Ascending aorta (tissue), 2 donors: ENCODE measurements at regions of chr19 and their contacts with region 1.

Region 1: DNA sequence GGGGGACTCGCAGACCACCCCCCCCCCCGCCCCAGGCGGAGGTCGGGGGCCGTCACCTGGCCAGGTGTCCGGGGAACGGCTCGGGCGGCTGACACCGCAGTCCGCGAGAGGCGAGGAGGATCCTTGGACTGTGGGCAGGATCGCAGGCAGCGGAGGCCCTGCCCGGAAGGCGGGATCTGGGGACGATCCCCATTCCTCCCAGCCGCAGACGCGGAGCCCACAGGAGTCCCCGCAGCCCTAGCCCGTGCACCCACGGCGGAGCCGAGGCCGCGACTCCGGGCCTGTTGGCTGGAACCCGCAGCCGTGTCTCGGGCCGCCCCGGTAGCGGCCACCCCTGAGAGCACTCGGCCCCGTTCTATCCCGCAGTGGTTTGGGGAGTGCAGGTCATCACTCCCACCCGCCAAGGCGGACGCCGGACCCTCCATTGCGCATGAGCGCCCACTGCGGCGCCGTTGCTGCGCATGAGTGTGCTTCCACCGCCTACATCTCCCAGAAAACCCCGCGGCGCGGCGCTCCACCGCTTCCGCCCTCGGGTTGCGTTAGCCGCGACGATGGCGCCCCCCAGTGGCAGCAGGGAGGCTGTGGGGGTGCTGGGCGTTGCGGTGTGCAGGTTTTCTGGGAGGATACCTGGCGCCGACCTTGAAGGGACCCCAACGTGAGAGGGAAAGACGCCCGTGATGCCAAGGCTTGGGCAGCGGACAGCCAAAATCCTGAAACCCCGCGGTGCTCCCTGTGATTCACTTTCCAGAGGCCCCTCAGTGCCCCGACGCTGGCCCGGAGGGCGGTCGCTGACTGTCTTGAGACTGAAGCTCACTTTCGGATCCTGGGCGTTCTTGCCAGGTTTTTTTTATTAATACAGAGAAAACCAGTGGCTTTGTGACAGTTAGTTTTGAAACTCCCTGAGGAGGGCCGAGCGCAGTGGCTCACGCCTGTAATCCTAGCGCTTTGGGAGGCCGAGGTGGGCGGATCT is 4.4 kb upstream of the ZNF329 start:
- DNase-seq: peak; percentile 77 to 98
- H3K4me3 ChIP-seq: peak overlapping the region; percentile 84 to 86
- H3K27ac ChIP-seq: peak overlapping the region; percentile 93 to 95
- H3K4me1 ChIP-seq: peaks cover 5 to 20% of the 10 kb centered on the region in 2 donors
- H3K27me3 ChIP-seq: no peaks in the 10 kb centered on the region
- CTCF ChIP-seq: peak; percentile 97 to 98 (median 98)

Region 2: GRCh38 chr19:56403764-56404704 is 1750.9 kb before region 1 on chr19 and contains the start of gene ZNF583:
- intact Hi-C with region 1: loop called (anchors 10 kb)
- DNase-seq: peak; percentile 92 to 98
- H3K4me3 ChIP-seq: peak within 1 kb of the TSS; percentile 88 to 91
- H3K27ac ChIP-seq: peak within 1 kb of the TSS; percentile 93 to 97
- H3K4me1 ChIP-seq: peaks cover 0 to 10% of the 10 kb centered on the region in 2 donors
- H3K27me3 ChIP-seq: no peaks in the 10 kb centered on the region
- CTCF ChIP-seq: no peak
- total RNA-seq, gene ZNF583: 0.21 TPM

Region 3: DNA sequence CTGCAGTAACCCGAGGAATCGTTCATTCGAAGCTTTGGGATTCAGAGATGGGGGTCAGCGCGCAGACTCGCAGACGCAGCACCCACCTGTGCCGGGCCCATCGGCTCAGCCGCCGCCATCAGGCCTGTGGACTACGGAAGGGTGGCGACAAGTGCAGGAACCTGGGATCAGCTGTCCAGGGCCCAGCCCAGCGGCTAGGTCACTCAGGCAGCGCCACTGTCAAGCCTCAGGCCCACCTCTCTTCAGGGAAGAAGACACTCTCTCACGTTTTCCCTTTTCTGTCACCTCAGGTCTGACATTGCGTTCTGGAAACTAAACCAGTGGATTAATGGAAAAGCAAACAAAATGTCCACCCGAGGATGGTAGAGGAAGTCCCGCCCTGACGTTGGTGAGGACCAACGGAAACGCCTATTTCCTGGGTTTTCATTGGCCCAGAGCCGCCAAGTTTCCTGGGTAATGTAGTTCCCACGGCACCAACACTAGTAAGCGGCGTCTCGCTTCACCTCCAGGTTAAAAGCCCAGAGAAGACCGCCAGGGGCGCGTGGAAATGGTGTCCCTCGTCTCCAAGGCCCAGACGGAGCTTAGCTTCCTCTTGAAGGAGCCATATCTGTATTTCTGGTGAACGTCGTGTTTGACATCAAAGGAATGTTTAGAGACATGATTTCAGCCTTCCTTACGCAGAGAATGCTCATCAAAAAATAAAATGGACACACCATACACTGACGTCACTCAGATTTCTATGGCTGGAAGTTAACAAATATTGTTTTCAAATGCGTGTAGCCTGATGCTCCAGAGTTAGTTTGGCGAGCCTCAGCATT is 677.6 kb before region 1 on chr19 and contains the start of gene ZNF772:
- intact Hi-C with region 1: loop called (anchors 10 kb)
- DNase-seq: peak; percentile 65 to 92
- H3K4me3 ChIP-seq: peak within 1 kb of the TSS; percentile 57 to 77
- H3K27ac ChIP-seq: peak within 1 kb of the TSS; percentile 63 to 76
- H3K4me1 ChIP-seq: no peaks in the 10 kb centered on the region
- H3K27me3 ChIP-seq: no peaks in the 10 kb centered on the region
- CTCF ChIP-seq: peak in 2 of 3 experiments; percentile 25 to 28
- total RNA-seq, gene ZNF772: 3.7 TPM

Region 4: GRCh38 chr19:57746580-57747471 is 408.1 kb before region 1 on chr19 and contains the start of gene ZNF776:
- intact Hi-C with region 1: loop called (anchors 10 kb)
- DNase-seq: peak; percentile 43 to 89
- H3K4me3 ChIP-seq: peak within 1 kb of the TSS; percentile 81 to 85
- H3K27ac ChIP-seq: peak within 1 kb of the TSS; percentile 55 to 63
- H3K4me1 ChIP-seq: no peaks in the 10 kb centered on the region
- H3K27me3 ChIP-seq: no peaks in the 10 kb centered on the region
- CTCF ChIP-seq: no peak
- total RNA-seq, gene ZNF776: 1.9 TPM

Region 5: DNA sequence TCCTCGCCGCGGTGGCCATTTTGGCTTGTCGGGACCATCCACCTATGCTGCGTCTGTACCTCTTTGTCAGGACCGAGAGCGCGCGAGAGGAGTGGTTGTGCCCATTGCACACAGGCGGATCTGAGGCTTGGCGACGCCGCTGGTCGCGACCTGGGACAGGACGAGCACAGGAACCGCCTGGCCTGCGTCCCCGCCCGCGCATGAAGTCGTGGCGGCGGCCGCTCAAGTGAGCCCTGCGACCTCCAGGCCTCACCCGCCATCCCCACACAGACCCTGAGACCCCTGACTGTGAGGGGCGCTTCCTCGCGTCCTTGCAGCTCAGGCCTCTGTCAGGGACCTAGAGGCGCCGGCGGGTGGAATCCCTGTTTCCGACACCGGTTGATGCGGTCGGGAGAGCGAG is 368.7 kb before region 1 on chr19:
- intact Hi-C with region 1: no loop called
- DNase-seq: no peak
- H3K4me3 ChIP-seq: no peak overlapping the region
- H3K27ac ChIP-seq: no peak overlapping the region
- H3K4me1 ChIP-seq: no peaks in the 10 kb centered on the region
- H3K27me3 ChIP-seq: no peaks in the 10 kb centered on the region
- CTCF ChIP-seq: no peak

Region 6: GRCh38 chr19:57947208-57948134 is 207.5 kb before region 1 on chr19 and contains the start of gene ZNF256:
- intact Hi-C with region 1: loop called (anchors 1 kb)
- DNase-seq: peak; percentile 55 to 95
- H3K4me3 ChIP-seq: peak within 1 kb of the TSS; percentile 58 to 82
- H3K27ac ChIP-seq: peak within 1 kb of the TSS; percentile 78 to 82
- H3K4me1 ChIP-seq: no peaks in the 10 kb centered on the region
- H3K27me3 ChIP-seq: no peaks in the 10 kb centered on the region
- CTCF ChIP-seq: peak; percentile 33 to 47 (median 46)
- total RNA-seq, gene ZNF256: 3.8 TPM

Region 7: GRCh38 chr19:58021541-58022282 is 133.3 kb before region 1 on chr19:
- intact Hi-C with region 1: loop called (anchors 1 kb)
- DNase-seq: peak in 1 of 2 donors; percentile 75
- H3K4me3 ChIP-seq: no peak overlapping the region
- H3K27ac ChIP-seq: no peak overlapping the region
- H3K4me1 ChIP-seq: no peaks in the 10 kb centered on the region
- H3K27me3 ChIP-seq: no peaks in the 10 kb centered on the region
- CTCF ChIP-seq: peak; percentile 38 to 61 (median 55)

Region 8: GRCh38 chr19:58117841-58118575 is 37.0 kb before region 1 on chr19:
- intact Hi-C with region 1: no loop called
- DNase-seq: no peak
- H3K4me3 ChIP-seq: no peak overlapping the region
- H3K27ac ChIP-seq: no peak overlapping the region
- H3K4me1 ChIP-seq: no peaks in the 10 kb centered on the region
- H3K27me3 ChIP-seq: no peaks in the 10 kb centered on the region
- CTCF ChIP-seq: no peak

Region 9: DNA sequence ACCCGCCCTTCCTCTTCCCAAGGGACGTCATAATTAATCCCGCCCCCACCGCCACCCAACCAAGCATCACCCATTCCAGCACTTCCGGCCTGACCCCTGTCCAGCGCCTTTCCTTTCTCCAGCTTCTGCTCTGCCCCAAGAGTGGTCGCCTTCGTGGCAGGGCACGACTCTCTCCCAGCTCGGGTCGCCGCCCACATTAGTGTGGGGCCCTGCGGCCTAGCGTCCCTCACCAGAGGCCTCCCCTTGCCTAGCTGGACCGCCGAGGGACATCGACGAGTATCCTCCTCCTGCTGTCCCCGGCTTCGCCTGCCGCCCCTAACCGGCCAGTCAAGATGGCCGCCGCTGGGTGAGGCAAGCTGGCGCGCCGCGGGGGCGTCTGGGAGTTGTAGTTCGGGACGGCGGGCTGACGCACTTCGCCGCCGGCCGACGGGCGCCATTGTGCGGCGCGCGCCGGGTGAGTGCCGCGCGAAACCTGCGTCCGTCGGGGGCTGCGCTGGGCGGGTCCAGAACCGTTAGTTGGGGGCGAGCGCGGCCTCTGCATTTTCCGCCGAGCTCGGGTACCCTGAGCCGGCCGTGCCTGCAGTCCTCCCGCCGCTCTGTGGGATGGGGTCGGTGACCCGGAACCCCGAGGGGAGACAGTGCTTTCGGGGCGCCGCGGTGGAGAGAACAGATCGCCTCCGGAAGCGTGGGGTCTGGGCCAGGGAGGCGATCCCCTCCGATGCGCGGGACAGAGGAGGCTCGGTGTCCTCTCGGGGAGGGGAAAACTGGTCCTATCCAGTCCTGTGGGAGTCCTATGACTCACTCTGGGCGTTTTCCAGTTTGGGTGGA is 28.2 kb after region 1 on chr19 and contains the start of gene ZNF274:
- intact Hi-C with region 1: loop called (anchors 1 kb)
- DNase-seq: peak; percentile 71 to 94
- H3K4me3 ChIP-seq: peak within 1 kb of the TSS; percentile 84 to 93
- H3K27ac ChIP-seq: peak within 1 kb of the TSS; percentile 99
- H3K4me1 ChIP-seq: no peaks in the 10 kb centered on the region
- H3K27me3 ChIP-seq: no peaks in the 10 kb centered on the region
- CTCF ChIP-seq: no peak
- total RNA-seq, gene ZNF274: 14.7 TPM